ENCODE measurements at regions of chr2 and their contacts with region 1.

Region 1: DNA sequence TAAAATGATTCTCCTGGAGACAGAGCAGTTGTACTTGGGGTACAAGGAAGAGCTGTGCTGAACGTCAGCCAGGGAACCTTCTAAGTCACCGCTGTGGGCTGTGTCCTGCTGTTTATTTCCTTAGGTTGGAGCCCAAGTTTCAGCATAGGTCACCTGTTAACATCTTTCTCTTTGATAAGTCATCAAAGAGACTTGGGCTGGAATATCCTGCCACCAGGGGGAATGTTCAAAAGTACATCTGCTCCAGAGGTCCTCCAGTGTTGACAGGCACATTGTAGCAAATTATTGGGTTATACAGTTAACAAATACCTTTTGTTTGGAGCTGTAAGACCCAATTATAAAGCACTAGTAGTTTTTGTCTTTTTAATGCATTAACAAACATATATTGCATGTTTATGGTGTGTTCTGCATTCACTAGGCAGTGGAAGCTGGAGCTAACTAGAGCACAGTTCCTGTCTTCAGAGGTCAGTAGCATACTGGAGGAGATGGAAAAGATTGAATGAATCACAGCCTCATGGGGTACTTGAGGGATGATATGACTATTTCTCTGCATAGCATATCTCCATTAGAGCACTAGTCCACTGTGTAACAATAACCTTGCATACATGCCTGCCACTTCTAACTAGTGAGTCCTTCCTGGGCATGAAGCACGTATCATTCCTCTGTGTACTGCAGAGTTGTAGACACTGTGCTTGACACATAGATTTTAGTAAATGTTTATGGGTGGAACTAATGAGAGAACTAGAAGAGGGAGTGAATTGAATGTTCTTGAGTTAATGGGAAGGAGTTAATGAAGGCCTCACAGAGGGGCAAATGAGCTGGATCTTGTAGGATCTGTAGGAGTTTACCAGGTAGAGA is 182.1 kb downstream of the AGAP1 start:
- DNase-seq: peak; percentile 69
- ATAC-seq: peak; percentile 81
- H3K4me3 ChIP-seq: no peak overlapping the region
- H3K27ac ChIP-seq: no peak overlapping the region
- H3K4me1 ChIP-seq: peaks cover 7% of the 10 kb centered on the region
- H3K27me3 ChIP-seq: no peaks in the 10 kb centered on the region; the same call in 1 of the 2 replicates
- CTCF ChIP-seq: no peak
- POLR2A ChIP-seq: no peak
- RAD21 ChIP-seq: no peak

Region 2: DNA sequence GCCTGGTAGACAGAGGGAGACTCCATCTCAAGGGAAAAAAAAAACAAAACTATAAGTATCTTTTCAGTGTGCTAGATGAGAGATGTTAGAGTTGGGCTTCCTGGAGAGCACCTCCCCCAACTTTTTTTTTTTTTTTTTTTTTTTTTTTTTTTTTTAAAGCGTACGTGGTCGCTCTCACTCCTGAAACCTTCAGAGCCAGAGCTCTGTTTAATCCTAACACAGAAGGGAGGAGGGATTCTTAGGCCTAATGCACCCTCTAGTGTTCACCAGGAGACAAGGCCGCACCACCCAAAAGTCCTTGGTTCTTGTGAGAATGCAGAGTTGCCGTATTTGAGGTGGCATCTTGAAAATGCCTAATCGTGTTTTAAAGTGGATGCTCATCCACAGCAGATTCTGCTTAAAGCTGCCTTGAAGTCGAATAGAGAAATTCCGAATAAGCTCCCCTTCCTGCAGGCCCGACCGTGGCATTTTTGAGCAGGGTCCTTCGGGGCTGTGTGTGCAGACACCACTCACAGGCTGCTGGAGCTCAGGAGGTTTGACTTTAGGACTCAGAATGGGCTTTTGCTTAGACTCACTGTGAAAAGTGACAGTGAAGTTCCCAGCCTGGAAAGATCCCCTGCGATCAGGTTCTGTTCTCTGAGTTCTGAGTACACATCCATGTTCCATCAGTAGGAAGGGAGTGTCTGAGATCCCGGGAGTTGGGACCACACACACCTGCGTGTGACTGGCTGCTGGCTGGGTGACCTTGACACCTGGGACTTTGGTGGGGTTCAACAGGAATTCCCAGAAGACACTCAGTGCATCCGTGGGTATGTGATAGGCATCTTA is 70.6 kb after region 1 on chr2:
- CTCF ChIA-PET with region 1: interaction called, 4 read pairs
- POLR2A ChIA-PET with region 1: no interaction called
- dilution Hi-C with region 1: no loop called
- in situ Hi-C with region 1: no loop called
- intact Hi-C with region 1: loop called (anchors 1 kb)
- DNase-seq: peak; percentile 90
- ATAC-seq: peak; percentile 88
- H3K4me3 ChIP-seq: no peak overlapping the region
- H3K27ac ChIP-seq: no peak overlapping the region
- H3K4me1 ChIP-seq: peaks cover 8% of the 10 kb centered on the region
- H3K27me3 ChIP-seq: no peaks in the 10 kb centered on the region
- CTCF ChIP-seq: peak; percentile 94
- POLR2A ChIP-seq: no peak
- RAD21 ChIP-seq: peak; percentile 97

Region 3: GRCh38 chr2:236928380-236929037 is 1252.6 kb after region 1 on chr2:
- CTCF ChIA-PET with region 1: no interaction called
- POLR2A ChIA-PET with region 1: no interaction called
- dilution Hi-C with region 1: no loop called
- in situ Hi-C with region 1: no loop called
- intact Hi-C with region 1: no loop called
- DNase-seq: no peak
- ATAC-seq: peak; percentile 42; the same call in 1 of the 2 replicates
- H3K4me3 ChIP-seq: no peak overlapping the region; the same call in 1 of the 2 replicates
- H3K27ac ChIP-seq: no peak overlapping the region
- H3K4me1 ChIP-seq: no peaks in the 10 kb centered on the region
- H3K27me3 ChIP-seq: peaks cover 4% of the 10 kb centered on the region
- CTCF ChIP-seq: no peak
- POLR2A ChIP-seq: no peak
- RAD21 ChIP-seq: no peak